ENCODE measurements at regions of chr10 and their contacts with region 1.

Region 1: GRCh38 chr10:101080933-101081931 is 19.4 kb downstream of the KAZALD1 start:
- DNase-seq: no peak
- H3K4me3 ChIP-seq: no peak overlapping the region
- H3K27ac ChIP-seq: no peak overlapping the region
- H3K4me1 ChIP-seq: peaks cover 0 to 21% of the 10 kb centered on the region in 2 experiments; a peak in 1 of 4 replicates
- H3K27me3 ChIP-seq: peaks cover 32% of the 10 kb centered on the region; the same call in 1 of the 2 replicates
- CTCF ChIP-seq: no peak
- EP300 ChIP-seq: no peak; a peak in 1 of 4 replicates
- RAD21 ChIP-seq: no peak

Region 2: GRCh38 chr10:100167553-100168312 is 913.5 kb before region 1 on chr10:
- CTCF ChIA-PET with region 1: no interaction called
- POLR2A ChIA-PET with region 1: no interaction called
- DNase-seq: no peak
- H3K4me3 ChIP-seq: no peak overlapping the region
- H3K27ac ChIP-seq: no peak overlapping the region
- H3K4me1 ChIP-seq: no peaks in the 10 kb centered on the region; a peak in 1 of 4 replicates
- H3K27me3 ChIP-seq: no peaks in the 10 kb centered on the region
- CTCF ChIP-seq: no peak
- EP300 ChIP-seq: no peak
- RAD21 ChIP-seq: no peak

Region 3: GRCh38 chr10:101042667-101043355 is 38.4 kb before region 1 on chr10:
- CTCF ChIA-PET with region 1: interaction called, 15 read pairs
- POLR2A ChIA-PET with region 1: no interaction called
- DNase-seq: peak; percentile 91
- H3K4me3 ChIP-seq: peak overlapping the region; percentile 53 to 68
- H3K27ac ChIP-seq: peak overlapping the region; percentile 91 to 97
- H3K4me1 ChIP-seq: peaks cover 10 to 18% of the 10 kb centered on the region in 2 experiments
- H3K27me3 ChIP-seq: no peaks in the 10 kb centered on the region
- CTCF ChIP-seq: no peak
- EP300 ChIP-seq: no peak
- RAD21 ChIP-seq: no peak

Measured in SK-N-SH (cell line).